Activated naive CD4-positive, alpha-beta T cell treated with anti-CD3 and anti-CD28 coated beads for 36 hours (primary cell): ENCODE measurements at regions of chr22 and their contacts with region 1.

Region 1: DNA sequence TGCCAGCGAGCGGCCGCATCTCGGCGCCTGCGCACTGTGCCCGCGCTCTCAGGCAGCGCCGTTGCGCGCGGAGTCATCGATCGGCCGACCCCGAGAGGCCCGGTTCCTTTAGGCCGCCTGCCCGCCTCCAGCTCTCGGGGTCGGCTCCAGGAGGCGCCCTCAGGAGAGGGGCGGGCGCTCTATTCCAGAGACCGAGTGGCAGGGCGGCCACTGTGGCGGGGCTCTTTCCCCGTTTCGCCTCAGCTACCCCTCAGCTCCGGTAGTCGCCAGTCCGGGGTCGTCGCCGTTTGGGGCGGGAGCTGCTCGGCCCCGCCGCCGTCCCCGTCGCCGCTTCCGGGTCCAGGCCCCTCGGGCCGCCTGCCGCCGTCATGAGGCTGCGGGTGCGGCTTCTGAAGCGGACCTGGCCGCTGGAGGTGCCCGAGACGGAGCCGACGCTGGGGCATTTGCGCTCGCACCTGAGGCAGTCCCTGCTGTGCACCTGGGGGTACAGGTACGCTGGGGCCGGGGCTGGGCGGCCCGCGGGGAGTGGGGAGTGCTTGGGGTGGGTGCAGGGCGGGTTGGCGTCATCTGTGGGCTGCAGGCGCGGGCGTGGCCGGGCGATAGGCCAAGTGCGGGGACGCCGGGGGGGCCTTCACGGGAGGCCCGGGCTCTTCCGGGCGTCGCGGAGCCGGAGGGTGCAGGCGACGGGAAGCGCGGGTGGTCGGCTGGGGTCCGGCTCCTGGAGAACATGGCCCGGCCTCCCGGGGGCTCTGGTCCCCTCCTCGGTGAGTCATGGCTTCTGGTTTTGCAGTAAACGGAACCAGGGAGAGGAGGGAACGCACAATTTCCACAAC is at the start of gene FBXO7:
- DNase-seq: peak; percentile 86
- H3K4me3 Mint-ChIP-seq: peak within 1 kb of the TSS; percentile 92
- H3K27ac Mint-ChIP-seq: peak within 1 kb of the TSS; percentile 93
- H3K4me1 Mint-ChIP-seq: peaks cover 17% of the 10 kb centered on the region
- H3K27me3 Mint-ChIP-seq: no peaks in the 10 kb centered on the region
- total RNA-seq, gene FBXO7: 62.5 to 65.9 TPM

Region 2: DNA sequence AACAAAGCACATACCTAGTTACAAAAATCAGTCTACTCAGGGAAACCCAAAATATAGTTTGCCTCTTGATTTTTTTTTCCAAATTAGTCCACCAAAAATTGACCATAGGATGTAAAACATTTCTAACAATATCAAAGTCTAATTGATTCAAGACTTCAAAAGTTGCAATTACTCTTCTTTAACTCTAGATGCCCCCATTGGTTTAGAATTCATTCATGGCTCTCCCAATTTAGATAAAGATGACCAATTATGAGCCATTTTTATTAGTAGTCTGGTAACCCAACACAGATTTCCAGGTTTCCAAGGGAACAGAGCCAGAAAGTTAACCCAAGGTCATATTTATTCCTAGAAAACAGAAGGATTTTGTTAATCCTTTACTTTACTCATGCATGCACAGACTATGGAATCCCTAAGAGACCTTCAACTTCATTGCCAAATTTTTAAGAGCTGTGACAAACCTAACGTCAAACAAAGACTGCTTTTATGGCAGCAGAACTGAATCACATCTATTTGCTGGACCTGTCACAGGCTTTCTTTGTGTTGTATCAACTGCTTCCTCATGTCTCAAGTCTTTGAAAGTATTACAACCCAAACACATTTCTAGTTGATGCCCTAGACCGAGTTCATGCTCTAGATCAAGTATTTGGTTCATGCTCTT is 371.1 kb before region 1 on chr22:
- CTCF ChIA-PET with region 1: no interaction called
- intact Hi-C with region 1: loop called (anchors 1 kb)
- DNase-seq: no peak
- H3K4me3 Mint-ChIP-seq: no peak overlapping the region
- H3K27ac Mint-ChIP-seq: no peak overlapping the region
- H3K4me1 Mint-ChIP-seq: no peaks in the 10 kb centered on the region
- H3K27me3 Mint-ChIP-seq: peaks cover 19% of the 10 kb centered on the region

Region 3: DNA sequence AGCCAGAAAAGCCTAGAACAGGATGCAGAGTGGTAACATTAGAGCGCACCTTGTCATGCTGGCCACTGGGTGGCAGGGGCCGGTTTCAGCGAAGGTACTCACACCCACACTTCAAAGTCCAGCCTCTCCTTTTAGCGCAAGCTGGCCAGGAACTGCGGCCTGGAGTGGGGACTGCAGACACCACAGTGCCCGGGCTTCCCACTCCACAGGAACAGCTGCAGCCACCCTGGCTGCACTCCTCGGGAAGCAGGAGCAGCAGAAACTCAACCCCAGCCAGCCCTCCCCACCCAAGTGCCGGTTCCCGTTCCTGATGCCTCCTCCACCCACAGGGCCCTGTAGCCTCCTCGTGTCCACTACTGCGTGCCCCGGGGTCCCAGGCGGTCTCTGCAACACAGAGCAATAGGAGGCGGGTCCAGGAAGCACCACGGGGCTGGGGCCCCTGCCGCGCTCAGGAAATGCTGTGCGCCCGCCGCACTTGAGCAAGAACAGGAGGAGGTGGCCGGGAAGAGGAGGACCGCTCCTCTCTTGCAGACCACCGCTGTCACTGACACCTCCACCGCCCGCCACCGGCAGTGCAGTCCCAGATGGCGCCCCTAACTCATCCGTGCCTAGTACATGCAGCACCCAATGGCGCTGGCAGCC is 272.2 kb before region 1 on chr22:
- CTCF ChIA-PET with region 1: interaction called, 11 read pairs
- intact Hi-C with region 1: loop called (anchors 1 kb)
- DNase-seq: peak; percentile 53
- H3K4me3 Mint-ChIP-seq: peak overlapping the region; percentile 66
- H3K27ac Mint-ChIP-seq: no peak overlapping the region
- H3K4me1 Mint-ChIP-seq: peaks cover 34% of the 10 kb centered on the region
- H3K27me3 Mint-ChIP-seq: peaks cover 17% of the 10 kb centered on the region

Region 4: DNA sequence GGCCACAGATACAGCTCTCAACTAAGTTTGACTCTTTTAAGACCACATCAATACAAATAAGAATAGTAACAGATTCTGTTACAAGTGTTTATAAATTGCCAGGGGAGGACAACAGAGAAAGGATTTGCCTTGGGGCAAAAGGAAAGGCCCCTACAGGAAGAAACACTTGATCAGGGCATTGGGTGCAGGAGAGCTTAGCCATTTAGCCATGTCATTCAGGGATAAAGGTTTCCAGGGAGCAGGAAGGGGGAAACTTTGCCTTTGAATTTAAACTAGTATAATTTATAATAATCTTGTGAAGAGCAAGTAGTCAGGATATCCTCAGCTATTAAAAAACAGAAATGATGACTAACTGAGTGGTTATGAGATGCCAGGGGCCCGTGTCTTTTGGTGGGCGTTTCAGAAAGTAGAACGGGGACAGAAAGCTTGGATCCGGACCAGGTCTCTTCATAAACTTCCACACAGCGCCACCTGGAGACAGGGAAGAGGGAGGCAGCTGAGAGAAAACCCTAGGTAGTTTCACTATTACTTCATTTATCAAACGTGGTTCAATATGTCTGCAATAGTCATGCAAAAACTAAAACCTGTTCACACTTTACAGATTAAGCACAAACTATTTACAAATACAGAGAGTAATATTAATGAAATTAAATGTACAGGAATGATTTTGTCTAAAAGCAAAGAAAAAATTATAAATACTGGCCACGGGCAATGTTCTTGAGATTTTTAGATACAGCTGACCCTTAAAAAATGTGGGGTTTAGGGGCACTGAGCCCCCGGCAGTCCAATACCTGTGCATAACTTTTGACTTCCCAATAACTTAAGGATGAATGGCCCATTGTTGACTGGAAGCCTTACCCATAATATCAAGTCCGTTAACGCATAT is 208.7 kb before region 1 on chr22:
- CTCF ChIA-PET with region 1: no interaction called
- intact Hi-C with region 1: loop called (anchors 2 kb)
- DNase-seq: peak; percentile 84
- H3K4me3 Mint-ChIP-seq: no peak overlapping the region
- H3K27ac Mint-ChIP-seq: no peak overlapping the region
- H3K4me1 Mint-ChIP-seq: peaks cover 8% of the 10 kb centered on the region
- H3K27me3 Mint-ChIP-seq: no peaks in the 10 kb centered on the region

Region 5: GRCh38 chr22:32411829-32412592 is 62.8 kb before region 1 on chr22 and contains the start of gene RTCB:
- CTCF ChIA-PET with region 1: interaction called, 41 read pairs
- intact Hi-C with region 1: loop called (anchors 1 kb)
- DNase-seq: peak; percentile 96
- H3K4me3 Mint-ChIP-seq: peak within 1 kb of the TSS; percentile 91
- H3K27ac Mint-ChIP-seq: peak within 1 kb of the TSS; percentile 94
- H3K4me1 Mint-ChIP-seq: peaks cover 48% of the 10 kb centered on the region
- H3K27me3 Mint-ChIP-seq: no peaks in the 10 kb centered on the region
- total RNA-seq, gene RTCB: 84.2 to 85.5 TPM

Region 6: GRCh38 chr22:32518848-32519247 is 44.0 kb after region 1 on chr22:
- CTCF ChIA-PET with region 1: no interaction called
- intact Hi-C with region 1: loop called (anchors 1 kb)
- DNase-seq: peak; percentile 30
- H3K4me3 Mint-ChIP-seq: no peak overlapping the region
- H3K27ac Mint-ChIP-seq: no peak overlapping the region
- H3K4me1 Mint-ChIP-seq: no peaks in the 10 kb centered on the region
- H3K27me3 Mint-ChIP-seq: no peaks in the 10 kb centered on the region